ENCODE measurements at regions of chr1 and their contacts with region 1.

Region 1: DNA sequence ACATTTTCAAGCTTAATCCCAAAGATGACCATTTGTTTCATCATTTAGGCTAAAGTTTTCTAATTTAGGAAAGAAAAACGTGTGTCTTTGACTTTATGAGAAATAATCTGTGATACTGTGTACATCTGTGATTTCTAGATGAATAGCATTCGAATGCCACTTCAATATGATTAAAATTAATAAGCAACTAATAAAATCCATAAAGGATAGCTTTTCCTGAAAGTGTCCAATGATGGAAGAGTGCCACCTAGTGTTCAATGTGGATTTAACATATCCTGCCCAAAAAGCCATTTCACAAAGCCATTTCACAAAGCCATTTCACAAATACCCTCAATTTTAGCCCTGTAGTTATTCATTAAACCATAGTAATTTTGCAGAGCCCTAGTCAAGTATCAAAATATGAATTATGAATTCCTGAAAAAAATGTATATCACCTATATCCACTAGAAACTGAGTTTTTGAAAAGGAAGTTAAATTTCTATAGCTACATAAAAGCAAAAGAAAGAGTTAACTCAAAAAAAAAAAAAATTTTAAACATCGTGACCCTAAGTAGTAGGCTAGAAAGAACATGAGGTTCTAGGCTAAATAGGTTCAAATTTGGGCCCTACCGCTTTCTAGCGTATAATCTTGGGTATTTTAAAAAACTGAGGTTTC is 19.1 kb downstream of the NME7 start:
- DNase-seq: peak; percentile 76
- H3K4me3 ChIP-seq: no peak overlapping the region
- H3K27ac ChIP-seq: no peak overlapping the region
- H3K4me1 ChIP-seq: no peaks in the 10 kb centered on the region
- H3K27me3 ChIP-seq: no peaks in the 10 kb centered on the region
- CTCF ChIP-seq: peak; percentile 83

Region 2: DNA sequence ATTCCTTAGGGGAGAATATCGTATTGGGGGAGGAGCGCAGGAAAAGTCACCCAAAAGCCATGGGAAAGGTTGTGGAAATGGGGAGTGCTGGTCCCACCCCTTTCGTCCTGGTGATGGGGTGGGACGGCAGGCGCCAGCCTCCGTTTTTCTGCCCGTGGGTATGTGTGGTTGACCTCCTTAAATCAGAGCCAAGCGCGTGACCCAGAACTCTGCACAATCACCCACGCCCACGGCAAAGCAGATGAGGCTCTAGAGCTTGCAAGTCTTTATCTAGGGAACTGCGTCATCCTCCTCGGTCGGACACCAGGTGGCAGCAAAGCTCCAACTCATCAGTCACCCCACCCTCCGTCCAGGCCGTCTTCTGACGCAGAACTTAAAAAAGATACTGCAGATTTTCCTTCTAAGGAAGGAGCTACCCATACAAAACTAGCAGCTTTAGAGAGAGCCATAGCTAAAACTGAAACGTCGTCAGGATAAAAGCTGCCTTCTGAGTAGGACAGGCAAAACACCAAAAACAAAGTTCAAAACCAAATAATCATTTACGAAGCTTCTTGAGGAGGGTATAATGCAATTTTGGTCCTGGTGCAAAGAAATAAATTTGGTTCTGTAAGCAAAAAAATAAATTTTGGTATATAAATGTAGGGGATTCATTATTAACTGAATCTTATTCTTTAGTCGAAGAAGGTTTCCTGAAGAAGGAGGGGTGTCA is 1005.8 kb before region 1 on chr1:
- CTCF ChIA-PET with region 1: interaction called, 3 read pairs
- POLR2A ChIA-PET with region 1: no interaction called
- intact Hi-C with region 1: loop called (anchors 10 kb)
- DNase-seq: peak; percentile 88
- H3K4me3 ChIP-seq: peak overlapping the region; percentile 29
- H3K27ac ChIP-seq: no peak overlapping the region
- H3K4me1 ChIP-seq: no peaks in the 10 kb centered on the region
- H3K27me3 ChIP-seq: no peaks in the 10 kb centered on the region
- CTCF ChIP-seq: peak; percentile 73

Region 3: DNA sequence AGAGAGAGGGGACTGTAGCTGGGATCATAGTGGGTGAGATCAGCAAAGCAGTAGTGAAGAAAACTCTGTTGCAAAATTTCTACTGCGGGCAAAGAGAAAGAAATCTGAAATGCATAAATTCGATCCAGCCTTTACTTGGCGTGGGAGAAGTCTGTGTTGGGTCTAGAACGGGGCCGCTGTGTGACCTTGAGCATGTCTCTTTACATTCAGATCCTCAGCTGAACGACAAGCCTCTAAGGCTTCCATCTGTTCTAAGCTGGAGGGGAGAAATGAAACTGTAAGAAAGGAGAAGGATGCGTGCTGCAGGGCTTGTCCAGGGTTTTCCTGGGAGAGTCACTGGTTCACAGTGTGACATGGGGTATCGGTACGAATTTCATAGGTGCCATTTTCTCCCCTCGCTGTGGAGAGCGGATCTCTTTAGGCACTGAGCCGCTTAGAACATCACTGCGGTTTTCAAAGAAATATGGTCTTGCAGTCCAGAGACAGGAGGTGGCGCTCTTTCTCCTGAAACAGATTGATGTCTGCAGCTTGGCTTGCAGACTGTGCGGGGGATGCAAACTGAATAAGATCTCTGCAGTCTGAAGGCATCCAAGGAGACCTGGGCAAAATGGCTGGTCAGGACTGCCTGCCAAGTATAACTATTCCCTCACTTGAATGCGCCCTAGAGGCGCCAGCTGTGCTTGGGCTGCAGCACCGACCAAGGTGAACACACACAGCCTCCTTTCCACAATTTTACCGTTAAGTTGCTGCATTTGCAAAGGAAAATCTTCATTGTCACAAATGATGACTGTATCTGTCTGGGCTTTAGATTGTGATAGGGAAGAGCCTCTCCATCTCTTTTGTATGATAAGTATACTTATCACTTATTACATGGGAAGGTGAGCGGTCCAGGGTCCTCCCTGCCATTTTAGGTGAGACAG is 908.8 kb before region 1 on chr1:
- CTCF ChIA-PET with region 1: no interaction called
- POLR2A ChIA-PET with region 1: no interaction called
- intact Hi-C with region 1: loop called (anchors 1 kb)
- DNase-seq: peak; percentile 93
- H3K4me3 ChIP-seq: no peak overlapping the region
- H3K27ac ChIP-seq: no peak overlapping the region
- H3K4me1 ChIP-seq: no peaks in the 10 kb centered on the region
- H3K27me3 ChIP-seq: no peaks in the 10 kb centered on the region
- CTCF ChIP-seq: peak; percentile 91

Region 4: DNA sequence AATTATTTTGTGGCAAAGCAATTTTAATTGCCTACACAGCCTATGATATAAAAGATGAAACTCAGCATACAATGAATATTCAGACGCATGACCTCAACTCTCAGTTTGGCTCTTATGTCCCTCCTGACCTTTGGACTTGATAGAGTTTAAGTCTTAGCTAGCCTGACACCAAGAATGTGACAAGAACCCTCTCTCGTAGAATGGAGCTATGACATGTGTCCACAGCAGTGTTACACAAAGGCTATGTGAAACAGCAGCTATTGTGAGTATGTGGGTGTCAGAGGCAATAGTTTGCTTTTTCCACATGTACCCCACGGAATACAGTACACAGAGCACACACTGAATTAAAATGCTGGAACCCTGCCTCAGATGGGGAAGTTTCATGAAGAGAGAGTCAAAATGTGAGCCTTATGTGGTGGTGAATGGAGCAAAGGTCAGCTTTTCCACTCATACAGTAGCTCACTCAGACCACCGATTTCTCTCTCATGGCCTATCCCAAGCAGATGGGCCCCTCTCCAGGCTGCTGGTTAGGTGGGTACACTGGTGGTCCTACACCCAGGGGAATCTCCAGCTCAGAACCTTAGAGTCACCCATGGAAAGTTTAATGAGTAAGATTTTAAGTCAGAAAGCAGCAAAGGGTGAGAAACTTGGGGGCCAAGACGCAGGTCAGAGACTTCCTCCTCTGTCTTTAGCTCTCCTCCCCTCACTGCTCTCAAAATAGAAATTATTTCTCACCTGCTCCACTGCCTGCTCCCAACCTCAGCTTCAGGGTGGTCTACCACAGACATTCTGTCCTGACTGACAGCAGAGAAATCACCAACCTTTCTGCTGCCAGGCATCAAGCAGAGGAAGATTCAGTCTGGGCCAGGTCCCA is 794.6 kb before region 1 on chr1:
- CTCF ChIA-PET with region 1: no interaction called
- POLR2A ChIA-PET with region 1: no interaction called
- intact Hi-C with region 1: loop called (anchors 5 kb)
- DNase-seq: no peak
- H3K4me3 ChIP-seq: no peak overlapping the region
- H3K27ac ChIP-seq: no peak overlapping the region
- H3K4me1 ChIP-seq: no peaks in the 10 kb centered on the region
- H3K27me3 ChIP-seq: no peaks in the 10 kb centered on the region
- CTCF ChIP-seq: no peak

Region 5: GRCh38 chr1:169106095-169106920 is 242.2 kb before region 1 on chr1 and contains the start of gene ATP1B1:
- CTCF ChIA-PET with region 1: interaction called, 3 read pairs
- POLR2A ChIA-PET with region 1: no interaction called
- intact Hi-C with region 1: loop called (anchors 10 kb)
- DNase-seq: peak; percentile 88
- H3K4me3 ChIP-seq: peak within 1 kb of the TSS; percentile 70
- H3K27ac ChIP-seq: peak within 1 kb of the TSS; percentile 47
- H3K4me1 ChIP-seq: peaks cover 14% of the 10 kb centered on the region
- H3K27me3 ChIP-seq: no peaks in the 10 kb centered on the region
- CTCF ChIP-seq: no peak
- total RNA-seq, gene ATP1B1: 20.2 and 23.7 TPM in 2 replicates

Region 6: DNA sequence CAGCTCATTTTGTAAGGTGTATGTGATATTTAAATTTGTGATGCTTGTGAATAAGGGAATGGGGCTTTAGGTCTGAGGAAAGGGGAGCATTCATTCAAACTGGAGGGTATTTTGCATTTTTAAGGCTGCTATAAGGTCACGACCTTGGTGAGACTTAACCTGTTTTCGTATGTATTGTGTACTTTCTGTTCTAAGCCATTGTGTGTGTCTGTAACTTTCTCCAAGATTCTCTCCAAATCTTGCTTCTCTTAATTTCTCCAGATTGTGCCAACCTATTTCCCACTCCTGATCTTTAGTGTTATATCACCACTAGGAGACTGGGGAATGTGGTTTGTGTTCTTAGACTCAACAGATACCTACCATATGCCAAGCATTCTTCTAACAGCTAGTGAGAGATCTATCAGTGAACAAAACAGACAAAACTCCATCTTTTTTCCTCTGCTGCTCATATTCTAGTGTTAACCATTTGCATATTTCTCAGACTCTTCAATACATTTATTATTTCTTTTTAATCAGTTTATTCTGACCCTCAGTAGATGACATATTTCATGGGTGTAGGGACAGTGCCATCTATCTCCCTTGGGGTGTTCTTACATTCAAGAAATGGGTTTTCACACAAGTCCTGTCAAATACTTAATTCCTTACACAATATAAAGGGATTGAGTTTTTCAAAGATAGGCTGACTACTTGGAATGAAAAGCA is 214.6 kb before region 1 on chr1:
- CTCF ChIA-PET with region 1: no interaction called
- POLR2A ChIA-PET with region 1: no interaction called
- intact Hi-C with region 1: loop called (anchors 10 kb)
- DNase-seq: no peak
- H3K4me3 ChIP-seq: no peak overlapping the region
- H3K27ac ChIP-seq: no peak overlapping the region
- H3K4me1 ChIP-seq: no peaks in the 10 kb centered on the region
- H3K27me3 ChIP-seq: no peaks in the 10 kb centered on the region
- CTCF ChIP-seq: no peak; the same call in 1 of the 2 replicates

Region 7: GRCh38 chr1:169240449-169241237 is 107.9 kb before region 1 on chr1:
- CTCF ChIA-PET with region 1: no interaction called
- POLR2A ChIA-PET with region 1: no interaction called
- intact Hi-C with region 1: no loop called
- DNase-seq: peak; percentile 35
- H3K4me3 ChIP-seq: no peak overlapping the region
- H3K27ac ChIP-seq: no peak overlapping the region
- H3K4me1 ChIP-seq: no peaks in the 10 kb centered on the region
- H3K27me3 ChIP-seq: no peaks in the 10 kb centered on the region
- CTCF ChIP-seq: no peak

Measured in A673 (cell line).